Natural killer cell (primary cell): ENCODE measurements at regions of chr2 and their contacts with region 1.

Region 1: GRCh38 chr2:44342854-44343253 is 18.4 kb downstream of the PREPL start:
- DNase-seq: peak in 1 of 2 donors; percentile 65
- ATAC-seq: peak in 2 of 3 donors; percentile 50 to 52
- H3K4me3 ChIP-seq: no peak overlapping the region
- H3K4me3 Mint-ChIP-seq: no peak overlapping the region
- H3K27ac ChIP-seq: no peak overlapping the region
- H3K27ac Mint-ChIP-seq: peak overlapping the region in 1 of 2 donors; percentile 54
- H3K4me1 ChIP-seq: no peaks in the 10 kb centered on the region
- H3K4me1 Mint-ChIP-seq: no peaks in the 10 kb centered on the region
- H3K27me3 ChIP-seq: no peaks in the 10 kb centered on the region
- H3K27me3 Mint-ChIP-seq: no peaks in the 10 kb centered on the region
- CTCF ChIP-seq: peak; percentile 23

Region 2: GRCh38 chr2:44016282-44016681 is 326.6 kb before region 1 on chr2:
- intact Hi-C with region 1: no loop called
- DNase-seq: peak in 1 of 2 donors; percentile 45
- ATAC-seq: peak in 2 of 3 donors; percentile 51 to 54
- H3K4me3 ChIP-seq: no peak overlapping the region
- H3K4me3 Mint-ChIP-seq: no peak overlapping the region
- H3K27ac ChIP-seq: no peak overlapping the region
- H3K27ac Mint-ChIP-seq: no peak overlapping the region
- H3K4me1 ChIP-seq: no peaks in the 10 kb centered on the region
- H3K4me1 Mint-ChIP-seq: no peaks in the 10 kb centered on the region
- H3K27me3 ChIP-seq: peaks cover 2% of the 10 kb centered on the region
- H3K27me3 Mint-ChIP-seq: peaks cover 18 to 34% of the 10 kb centered on the region in 2 donors
- CTCF ChIP-seq: no peak

Region 3: DNA sequence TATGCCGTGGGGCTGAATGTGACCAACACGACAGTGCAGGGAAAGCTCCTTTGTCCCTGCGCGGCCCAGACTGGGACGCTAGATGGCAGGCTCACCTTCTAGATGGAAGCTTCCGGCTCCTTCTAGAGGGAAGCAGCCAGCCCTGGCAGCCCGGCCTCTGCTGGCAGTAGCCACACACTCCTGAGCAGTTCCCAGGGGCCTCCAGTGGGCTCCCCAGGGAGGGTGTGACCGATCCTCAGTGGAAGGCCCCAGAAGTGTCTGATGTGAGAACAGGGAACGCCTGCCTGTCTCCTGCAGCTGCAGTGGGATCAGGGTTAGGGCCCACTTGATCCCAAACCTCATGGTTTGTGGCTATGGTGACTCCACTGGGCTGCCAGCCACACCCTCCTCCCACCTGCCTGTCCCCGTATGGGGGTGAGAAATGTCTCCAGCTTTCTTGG is 298.6 kb before region 1 on chr2:
- intact Hi-C with region 1: loop called (anchors 5 kb)
- DNase-seq: peak; percentile 48 to 84
- ATAC-seq: peak; percentile 92 to 100 (median 100)
- H3K4me3 ChIP-seq: no peak overlapping the region
- H3K4me3 Mint-ChIP-seq: no peak overlapping the region
- H3K27ac ChIP-seq: no peak overlapping the region
- H3K27ac Mint-ChIP-seq: no peak overlapping the region
- H3K4me1 ChIP-seq: peaks cover 6% of the 10 kb centered on the region
- H3K4me1 Mint-ChIP-seq: no peaks in the 10 kb centered on the region
- H3K27me3 ChIP-seq: no peaks in the 10 kb centered on the region
- H3K27me3 Mint-ChIP-seq: peaks cover 5 to 17% of the 10 kb centered on the region in 2 donors
- CTCF ChIP-seq: peak; percentile 62

Region 4: GRCh38 chr2:44244129-44244871 is 98.6 kb before region 1 on chr2:
- intact Hi-C with region 1: loop called (anchors 10 kb)
- DNase-seq: peak; percentile 22 to 88
- ATAC-seq: peak; percentile 90 to 97 (median 97)
- H3K4me3 ChIP-seq: peak overlapping the region; percentile 15
- H3K4me3 Mint-ChIP-seq: peak overlapping the region; percentile 74
- H3K27ac ChIP-seq: no peak overlapping the region
- H3K27ac Mint-ChIP-seq: peak overlapping the region; percentile 11 to 58
- H3K4me1 ChIP-seq: peaks cover 2% of the 10 kb centered on the region
- H3K4me1 Mint-ChIP-seq: peaks cover 16 to 20% of the 10 kb centered on the region in 2 donors
- H3K27me3 ChIP-seq: no peaks in the 10 kb centered on the region
- H3K27me3 Mint-ChIP-seq: no peaks in the 10 kb centered on the region
- CTCF ChIP-seq: peak; percentile 70

Region 5: DNA sequence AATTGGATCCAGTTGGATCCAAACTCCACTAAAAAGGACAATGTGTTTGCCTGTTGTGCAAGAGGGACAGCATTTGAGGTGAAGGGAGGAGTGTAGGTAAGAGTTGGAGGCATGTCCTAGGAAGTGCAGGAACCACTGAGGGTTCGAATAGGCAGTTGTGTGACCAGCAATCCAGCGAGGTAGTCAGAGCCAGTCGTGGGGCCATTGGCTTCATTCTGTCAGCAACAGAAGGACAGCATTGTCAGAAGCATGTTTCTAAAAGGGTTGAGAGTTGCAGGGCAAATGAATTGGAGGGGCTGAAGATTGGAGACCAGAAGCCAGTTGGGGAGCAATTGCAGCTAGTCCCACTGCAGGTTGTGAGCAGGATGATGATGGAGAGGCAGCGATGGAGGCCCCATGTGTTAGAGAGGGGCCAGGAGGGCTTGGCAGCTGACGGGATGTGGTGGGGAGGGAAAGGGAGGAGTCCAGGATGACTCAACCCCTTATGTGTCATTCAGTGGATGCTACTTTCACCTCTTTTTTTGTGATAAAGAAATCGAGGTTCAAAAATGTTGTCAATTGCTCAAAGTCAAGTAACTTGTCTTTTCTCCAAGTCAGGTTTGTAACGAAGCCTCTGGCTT is 501.9 kb after region 1 on chr2:
- intact Hi-C with region 1: no loop called
- DNase-seq: no peak
- ATAC-seq: no peak
- H3K4me3 ChIP-seq: no peak overlapping the region
- H3K4me3 Mint-ChIP-seq: no peak overlapping the region
- H3K27ac ChIP-seq: no peak overlapping the region
- H3K27ac Mint-ChIP-seq: no peak overlapping the region
- H3K4me1 ChIP-seq: no peaks in the 10 kb centered on the region
- H3K4me1 Mint-ChIP-seq: no peaks in the 10 kb centered on the region
- H3K27me3 ChIP-seq: peaks cover 3% of the 10 kb centered on the region
- H3K27me3 Mint-ChIP-seq: peaks cover 14 to 28% of the 10 kb centered on the region in 2 donors
- CTCF ChIP-seq: no peak